ENCODE measurements at regions of chr21 and their contacts with region 1.

Region 1: GRCh38 chr21:39715804-39716397 is 29.1 kb upstream of the IGSF5 start:
- DNase-seq: no peak
- H3K4me3 ChIP-seq: no peak overlapping the region
- H3K27ac ChIP-seq: no peak overlapping the region
- H3K4me1 ChIP-seq: no peaks in the 10 kb centered on the region
- H3K27me3 ChIP-seq: no peaks in the 10 kb centered on the region
- CTCF ChIP-seq: peak; percentile 34 to 76 (median 51)
- POLR2A ChIP-seq: no peak

Region 2: DNA sequence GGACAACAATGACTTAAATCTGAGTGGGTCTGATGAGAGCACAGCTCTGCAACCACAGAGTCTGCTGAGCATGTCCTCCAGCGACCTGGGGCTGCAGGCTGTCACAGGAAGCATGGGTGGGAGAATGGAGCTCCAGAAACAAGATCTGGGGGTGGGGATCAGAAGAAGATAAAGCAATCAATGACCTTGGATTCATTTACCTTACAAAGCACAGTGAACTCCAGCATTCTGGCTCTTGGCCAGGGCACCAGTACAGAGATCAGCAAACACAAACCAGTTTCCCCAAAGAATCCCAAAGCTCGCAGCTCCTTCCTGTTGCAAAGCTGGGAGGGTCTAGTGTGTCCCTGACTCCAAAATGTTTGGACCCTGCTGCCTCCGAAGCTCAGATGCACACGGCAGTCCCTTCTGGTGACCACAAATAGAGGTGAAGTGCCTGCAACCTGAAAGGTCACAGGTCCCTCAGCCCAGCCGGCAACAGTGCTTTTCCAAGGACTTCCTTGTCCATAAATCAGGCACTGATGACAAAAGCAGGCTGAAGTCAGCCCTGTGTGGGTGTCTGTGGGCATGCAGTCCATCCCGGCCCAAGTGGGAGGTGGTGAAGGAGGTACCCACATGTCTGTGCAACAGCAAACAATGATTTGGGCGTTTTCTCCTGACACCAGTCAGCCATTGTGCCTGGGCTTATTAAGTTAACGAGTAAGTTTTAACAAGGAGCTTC is 188.1 kb before region 1 on chr21:
- intact Hi-C with region 1: loop called (anchors 5 kb)
- DNase-seq: no peak
- H3K4me3 ChIP-seq: no peak overlapping the region
- H3K27ac ChIP-seq: no peak overlapping the region
- H3K4me1 ChIP-seq: peaks cover 12% of the 10 kb centered on the region
- H3K27me3 ChIP-seq: no peaks in the 10 kb centered on the region
- CTCF ChIP-seq: no peak
- POLR2A ChIP-seq: no peak

Region 3: DNA sequence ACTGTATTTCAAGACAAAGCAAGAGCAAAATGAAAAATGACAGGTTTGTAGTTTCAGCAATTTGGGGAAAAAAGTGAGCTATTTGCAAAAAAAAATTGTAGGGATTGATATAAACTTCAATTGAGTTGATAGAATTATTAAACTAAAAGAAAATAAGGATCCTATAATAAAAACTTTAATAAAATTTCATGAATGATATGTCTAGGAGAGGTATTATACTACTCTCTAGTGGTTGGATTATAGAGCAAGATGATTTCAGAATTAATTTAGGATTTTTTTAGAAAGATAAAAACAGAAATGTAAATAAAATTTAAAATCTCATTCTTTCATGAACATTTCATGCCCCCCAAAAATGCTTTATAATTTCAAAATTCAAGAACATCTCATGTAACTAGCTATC is 700.6 kb after region 1 on chr21:
- intact Hi-C with region 1: no loop called
- DNase-seq: no peak
- H3K4me3 ChIP-seq: no peak overlapping the region
- H3K27ac ChIP-seq: no peak overlapping the region
- H3K4me1 ChIP-seq: no peaks in the 10 kb centered on the region
- H3K27me3 ChIP-seq: no peaks in the 10 kb centered on the region
- CTCF ChIP-seq: no peak
- POLR2A ChIP-seq: no peak